ENCODE measurements at regions of chr1 and their contacts with region 1.

Region 1: GRCh38 chr1:76154206-76154956 is 79.8 kb downstream of the ST6GALNAC3 start:
- H3K4me3 Mint-ChIP-seq: peak overlapping the region; percentile 78
- H3K27ac Mint-ChIP-seq: peak overlapping the region; percentile 85
- H3K4me1 Mint-ChIP-seq: peaks cover 8% of the 10 kb centered on the region
- H3K27me3 Mint-ChIP-seq: no peaks in the 10 kb centered on the region

Region 2: GRCh38 chr1:75991497-75992114 is 162.8 kb before region 1 on chr1:
- intact Hi-C with region 1: loop called (anchors 5 kb)
- H3K4me3 Mint-ChIP-seq: no peak overlapping the region
- H3K27ac Mint-ChIP-seq: no peak overlapping the region
- H3K4me1 Mint-ChIP-seq: no peaks in the 10 kb centered on the region
- H3K27me3 Mint-ChIP-seq: no peaks in the 10 kb centered on the region

Region 3: GRCh38 chr1:76190749-76191424 is 36.5 kb after region 1 on chr1:
- intact Hi-C with region 1: no loop called
- H3K4me3 Mint-ChIP-seq: no peak overlapping the region
- H3K27ac Mint-ChIP-seq: no peak overlapping the region
- H3K4me1 Mint-ChIP-seq: no peaks in the 10 kb centered on the region
- H3K27me3 Mint-ChIP-seq: no peaks in the 10 kb centered on the region

Measured in dendritic cell treated with granulocyte-macrophage colony-stimulating factor and Interleukin-4, amounts not matched to agents 40 ng/mL and 50 ng/mL, for 4 days (primary cell).